HEK293 (cell line): ENCODE measurements at regions of chr17 and their contacts with region 1.

Region 1: DNA sequence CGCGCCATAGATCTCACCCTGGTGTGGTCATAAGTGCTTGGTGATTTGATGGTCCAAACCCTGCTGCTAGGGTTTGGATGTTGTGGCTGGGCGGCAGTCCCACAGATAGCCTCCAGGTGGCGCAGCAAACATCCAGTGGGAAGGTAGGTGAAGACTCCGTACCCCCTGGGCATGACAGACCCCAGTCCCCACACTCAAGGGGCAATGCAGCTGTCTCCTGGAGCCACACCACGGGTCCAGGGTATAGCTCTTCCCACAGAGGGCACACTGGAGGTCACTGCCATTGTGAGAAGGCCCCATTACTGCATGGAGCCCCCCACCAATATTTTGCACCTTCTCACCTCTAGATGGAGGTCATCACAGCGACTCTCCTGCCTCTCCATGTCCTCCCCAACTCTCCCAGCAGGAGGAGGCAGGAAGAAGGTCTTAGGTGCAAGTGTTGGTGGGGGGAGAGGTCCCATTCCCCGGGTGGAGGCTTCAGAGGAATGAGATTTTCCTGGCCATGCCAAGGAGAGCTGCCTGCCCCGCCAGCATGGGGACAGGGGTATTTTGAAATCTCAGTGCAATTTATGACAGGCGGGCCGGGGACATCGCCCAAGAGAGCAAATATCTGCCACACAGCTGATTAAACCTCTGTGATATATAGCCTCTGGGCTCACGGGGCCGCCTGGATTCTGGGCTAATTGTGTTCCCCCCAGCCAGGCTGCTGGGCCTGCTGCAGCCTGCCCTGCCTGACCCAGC is 17.1 kb upstream of the C17orf113 start:
- H3K4me3 ChIP-seq: no peak overlapping the region
- H3K27ac ChIP-seq: no peak overlapping the region
- H3K4me1 ChIP-seq: no peaks in the 10 kb centered on the region
- CTCF ChIP-seq: peak; percentile 99

Region 2: GRCh38 chr17:41957031-41957868 is 110.3 kb before region 1 on chr17:
- CTCF ChIA-PET with region 1: no interaction called
- POLR2A ChIA-PET with region 1: no interaction called
- H3K4me3 ChIP-seq: no peak overlapping the region
- H3K27ac ChIP-seq: no peak overlapping the region
- H3K4me1 ChIP-seq: peaks cover 4% of the 10 kb centered on the region; the same call in 1 of the 2 replicates
- CTCF ChIP-seq: no peak

Region 3: DNA sequence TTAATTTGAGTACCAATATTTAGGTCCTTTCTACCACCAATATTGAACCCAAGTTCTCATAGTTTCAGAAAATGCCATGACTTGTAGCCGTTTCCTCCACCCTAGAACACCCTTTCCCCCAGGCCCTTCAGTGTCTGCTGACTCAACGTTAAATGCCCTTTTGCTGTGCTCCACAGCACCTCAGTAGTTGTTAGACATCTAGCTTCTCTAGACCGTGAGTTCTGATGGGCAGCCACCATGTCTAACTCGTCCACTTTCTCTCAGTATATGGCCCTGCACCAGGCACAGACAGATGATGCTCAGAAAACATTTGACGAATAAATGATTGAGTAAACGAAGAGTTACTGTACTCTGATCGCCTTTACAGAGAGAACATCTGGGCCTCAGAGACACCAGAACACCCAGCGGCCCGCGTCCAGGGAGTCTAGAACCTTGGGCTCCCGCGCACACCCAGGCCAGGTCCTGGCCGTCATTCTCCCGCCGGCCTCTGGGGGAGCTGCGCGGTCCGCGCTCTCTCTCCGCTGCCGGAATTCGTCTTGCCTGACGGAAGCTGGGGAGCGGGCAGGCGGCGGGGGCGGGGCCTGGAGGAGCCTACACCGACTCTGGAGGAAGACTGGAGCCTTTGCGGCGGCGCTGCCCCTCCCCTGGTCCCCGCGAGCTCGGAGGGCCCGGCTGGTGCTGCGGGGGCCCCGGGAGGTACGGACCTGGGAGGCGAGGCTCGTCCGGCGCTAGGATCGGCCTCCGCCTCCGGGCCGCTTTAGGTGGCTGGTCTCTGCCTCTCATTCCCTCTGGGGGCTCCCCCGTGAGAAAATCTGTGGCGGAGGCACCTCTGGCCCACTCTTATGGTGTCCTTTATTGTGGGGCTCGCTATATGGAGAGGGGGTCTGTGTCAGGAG is 47.8 kb before region 1 on chr17 and contains the start of gene NKIRAS2:
- CTCF ChIA-PET with region 1: interaction called, 16 read pairs
- POLR2A ChIA-PET with region 1: no interaction called
- H3K4me3 ChIP-seq: peak within 1 kb of the TSS; percentile 93
- H3K27ac ChIP-seq: peak within 1 kb of the TSS; percentile 69; the same call in 1 of the 2 replicates
- H3K4me1 ChIP-seq: peaks cover 3% of the 10 kb centered on the region; the same call in 1 of the 2 replicates
- CTCF ChIP-seq: peak; percentile 94

Region 4: DNA sequence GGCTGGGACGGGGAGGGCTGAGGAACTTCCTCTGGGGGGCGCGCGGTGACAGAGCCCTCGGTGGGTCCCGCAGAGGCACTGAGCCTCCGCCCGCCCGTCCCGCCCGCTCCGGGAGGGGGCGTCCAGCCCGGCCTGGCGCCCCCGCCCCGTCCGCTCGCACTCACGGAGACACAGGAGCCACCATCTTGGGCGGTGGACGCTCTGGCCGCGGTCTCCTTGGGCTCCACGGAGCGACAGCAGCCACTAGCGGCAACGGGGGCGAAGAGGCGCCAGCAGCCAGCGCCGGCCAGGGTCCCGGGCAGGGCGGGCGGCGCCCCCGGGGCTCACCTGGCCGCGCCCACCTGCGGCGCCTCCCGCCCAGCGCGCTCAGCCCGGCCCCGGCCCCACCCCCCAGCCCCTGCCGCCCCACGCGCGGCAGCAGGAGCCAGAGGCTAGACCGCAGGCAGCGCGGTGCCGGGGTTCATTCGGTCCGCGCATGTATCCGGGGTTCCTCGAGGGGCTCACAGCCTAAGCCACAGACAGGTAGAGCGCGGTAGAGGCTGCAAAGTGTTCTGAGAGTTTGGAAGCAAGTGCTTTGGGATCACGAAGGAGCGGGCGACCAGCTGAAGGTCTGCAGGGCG is 17.0 kb before region 1 on chr17 and contains the start of gene C17orf113:
- CTCF ChIA-PET with region 1: interaction called, 49 read pairs
- POLR2A ChIA-PET with region 1: interaction called, 3 read pairs
- H3K4me3 ChIP-seq: peak within 1 kb of the TSS; percentile 50
- H3K27ac ChIP-seq: peak within 1 kb of the TSS; percentile 38; the same call in 1 of the 2 replicates
- H3K4me1 ChIP-seq: no peaks in the 10 kb centered on the region; the same call in 1 of the 2 replicates
- CTCF ChIP-seq: peak; percentile 94

Region 5: DNA sequence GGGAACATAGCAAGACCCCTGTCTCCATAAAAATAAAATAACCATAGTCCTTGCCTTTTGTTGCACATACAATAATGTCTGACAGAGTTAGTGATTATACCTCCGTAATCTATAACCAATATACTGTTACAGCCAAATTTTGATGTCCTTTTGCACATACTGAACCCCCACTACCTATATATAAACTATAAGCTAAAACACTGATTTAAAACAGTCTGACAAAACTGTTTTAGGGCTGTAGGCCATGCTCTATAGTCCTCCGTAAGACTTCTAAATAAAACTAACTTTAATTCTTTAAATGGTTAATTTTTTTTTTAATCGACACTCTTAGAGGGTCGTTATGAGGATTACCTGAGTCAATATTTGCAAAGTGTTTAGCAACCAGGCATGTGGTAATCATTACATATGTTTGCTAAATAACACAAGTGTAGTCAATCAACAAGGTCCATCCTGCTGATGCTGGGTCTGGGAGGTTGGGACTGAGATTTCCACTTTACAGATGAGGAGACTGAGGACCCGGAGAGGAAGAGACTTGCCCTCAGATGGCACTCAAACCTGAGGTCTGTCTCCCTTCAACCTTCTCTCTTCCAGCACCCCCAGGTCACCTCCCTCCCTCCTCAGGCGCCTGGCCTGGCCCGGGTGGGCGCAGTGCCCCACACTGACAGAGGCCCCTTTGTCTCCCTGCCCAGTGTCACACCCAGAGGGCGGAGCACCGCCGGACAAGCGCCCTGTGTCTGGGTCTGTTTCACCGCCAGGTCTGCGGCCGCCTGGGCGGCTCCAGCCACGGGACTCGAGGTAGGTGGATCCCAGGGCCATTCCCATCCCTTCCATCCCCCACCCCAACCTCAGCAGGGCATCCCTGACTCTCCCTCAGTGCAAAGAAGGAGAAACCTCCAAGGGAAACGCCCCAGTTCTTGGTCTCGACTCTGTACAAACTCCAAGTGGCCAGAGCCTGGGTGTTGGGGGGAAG is 20.5 kb after region 1 on chr17:
- CTCF ChIA-PET with region 1: interaction called, 26 read pairs
- POLR2A ChIA-PET with region 1: no interaction called
- H3K4me3 ChIP-seq: no peak overlapping the region
- H3K27ac ChIP-seq: no peak overlapping the region
- H3K4me1 ChIP-seq: peaks cover 5% of the 10 kb centered on the region
- CTCF ChIP-seq: no peak

Region 6: DNA sequence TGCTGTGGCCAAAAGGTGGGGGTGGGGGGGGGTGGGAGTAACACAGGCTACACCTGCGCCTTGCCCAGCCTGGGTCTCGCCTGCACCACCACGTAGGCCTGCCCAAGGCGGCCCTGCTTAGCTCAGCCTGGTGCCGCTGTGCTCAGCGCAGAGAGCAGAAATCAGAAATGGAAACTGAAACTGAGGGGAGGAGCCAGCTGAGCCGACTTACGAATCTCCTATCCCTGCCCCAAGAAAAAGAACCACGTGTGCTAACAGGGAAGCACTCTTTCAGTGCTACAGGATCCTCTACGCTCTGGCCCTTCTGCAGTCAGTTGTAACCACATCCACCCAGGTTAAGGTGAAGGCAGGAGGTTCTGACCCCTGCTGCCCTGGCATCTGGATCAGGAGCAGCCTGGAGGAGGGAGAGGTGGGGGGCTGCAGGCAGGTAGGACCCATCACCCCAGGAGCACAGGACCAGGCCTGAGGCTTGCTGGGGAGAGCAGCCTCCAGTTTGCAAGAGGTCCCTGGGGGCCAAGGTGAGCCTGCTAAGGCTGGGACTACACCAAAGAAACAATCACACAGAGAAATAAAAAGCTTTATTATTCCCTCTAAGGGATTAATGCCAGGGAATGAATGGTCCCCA is 45.1 kb after region 1 on chr17 and contains the start of gene DHX58:
- CTCF ChIA-PET with region 1: interaction called, 60 read pairs
- POLR2A ChIA-PET with region 1: no interaction called
- H3K4me3 ChIP-seq: no peak within 1 kb of the TSS
- H3K27ac ChIP-seq: no peak within 1 kb of the TSS
- H3K4me1 ChIP-seq: peaks cover 4% of the 10 kb centered on the region; the same call in 1 of the 2 replicates
- CTCF ChIP-seq: no peak

Region 7: DNA sequence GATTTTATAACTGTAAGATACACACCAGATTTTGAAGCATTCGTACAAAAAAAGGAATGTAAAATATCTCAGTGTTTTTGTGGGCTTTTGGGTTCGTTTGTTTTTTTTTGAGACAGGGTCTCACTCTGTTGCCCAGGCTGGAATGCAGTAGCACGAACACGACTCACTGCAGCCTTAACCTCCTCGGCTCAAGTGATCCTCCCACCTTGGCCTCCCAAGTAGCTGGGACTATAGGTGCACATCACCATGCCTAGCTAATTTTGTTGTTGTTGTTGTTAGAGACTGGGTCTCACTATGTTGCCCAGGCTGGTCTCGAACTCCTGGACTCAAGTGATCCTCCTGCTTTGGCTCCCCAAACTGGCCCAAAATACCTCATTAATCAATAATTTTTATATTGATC is 192.8 kb after region 1 on chr17:
- CTCF ChIA-PET with region 1: no interaction called
- POLR2A ChIA-PET with region 1: no interaction called
- H3K4me3 ChIP-seq: no peak overlapping the region
- H3K27ac ChIP-seq: no peak overlapping the region
- H3K4me1 ChIP-seq: peaks cover 19% of the 10 kb centered on the region
- CTCF ChIP-seq: no peak